Caco-2 (cell line): ENCODE measurements at regions of chr13 and their contacts with region 1.

Region 1: GRCh38 chr13:84896128-84896527 is 903.1 kb downstream of the SLITRK6 start:
- DNase-seq: peak in 1 of 2 experiments; percentile 55
- H3K4me3 ChIP-seq: no peak overlapping the region
- H3K4me3 Mint-ChIP-seq: no peak overlapping the region
- H3K27ac Mint-ChIP-seq: no peak overlapping the region
- H3K4me1 ChIP-seq: no peaks in the 10 kb centered on the region
- H3K4me1 Mint-ChIP-seq: no peaks in the 10 kb centered on the region
- H3K27me3 ChIP-seq: no peaks in the 10 kb centered on the region
- H3K27me3 Mint-ChIP-seq: no peaks in the 10 kb centered on the region
- CTCF ChIP-seq: peak; percentile 55 to 83

Region 2: GRCh38 chr13:84315527-84315926 is 580.6 kb before region 1 on chr13:
- CTCF ChIA-PET with region 1: no interaction called
- POLR2A ChIA-PET with region 1: no interaction called
- intact Hi-C with region 1: no loop called
- DNase-seq: no peak
- H3K4me3 ChIP-seq: no peak overlapping the region
- H3K4me3 Mint-ChIP-seq: no peak overlapping the region
- H3K27ac Mint-ChIP-seq: no peak overlapping the region
- H3K4me1 ChIP-seq: no peaks in the 10 kb centered on the region
- H3K4me1 Mint-ChIP-seq: no peaks in the 10 kb centered on the region
- H3K27me3 ChIP-seq: no peaks in the 10 kb centered on the region
- H3K27me3 Mint-ChIP-seq: no peaks in the 10 kb centered on the region
- CTCF ChIP-seq: no peak

Region 3: GRCh38 chr13:85806553-85807175 is 910.5 kb after region 1 on chr13:
- CTCF ChIA-PET with region 1: no interaction called
- POLR2A ChIA-PET with region 1: no interaction called
- intact Hi-C with region 1: loop called (anchors 1 kb)
- DNase-seq: peak in 1 of 2 experiments; percentile 59
- H3K4me3 ChIP-seq: no peak overlapping the region
- H3K4me3 Mint-ChIP-seq: no peak overlapping the region
- H3K27ac Mint-ChIP-seq: no peak overlapping the region
- H3K4me1 ChIP-seq: no peaks in the 10 kb centered on the region
- H3K4me1 Mint-ChIP-seq: no peaks in the 10 kb centered on the region
- H3K27me3 ChIP-seq: no peaks in the 10 kb centered on the region
- H3K27me3 Mint-ChIP-seq: no peaks in the 10 kb centered on the region
- CTCF ChIP-seq: peak; percentile 56 to 81

Region 4: DNA sequence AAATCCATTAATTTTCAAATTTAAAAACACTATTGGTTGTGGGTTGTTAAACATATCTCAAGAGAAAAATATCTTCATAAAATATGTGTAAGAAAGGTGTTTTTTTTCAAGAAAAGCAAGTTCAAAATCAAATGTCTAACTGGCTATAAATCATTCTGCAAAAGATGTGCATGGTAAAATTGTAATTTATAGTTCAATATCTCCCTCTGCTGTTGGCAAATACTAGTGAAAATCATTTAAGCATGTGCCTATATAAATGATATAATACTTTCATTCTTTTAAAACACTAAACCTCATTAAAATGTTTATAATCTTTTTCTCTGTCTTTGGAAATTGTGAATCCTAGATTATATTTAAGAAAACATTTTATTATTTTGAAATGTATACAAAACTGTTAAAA is 920.3 kb after region 1 on chr13:
- CTCF ChIA-PET with region 1: no interaction called
- POLR2A ChIA-PET with region 1: no interaction called
- intact Hi-C with region 1: loop called (anchors 2 kb)
- DNase-seq: no peak
- H3K4me3 ChIP-seq: no peak overlapping the region
- H3K4me3 Mint-ChIP-seq: no peak overlapping the region
- H3K27ac Mint-ChIP-seq: no peak overlapping the region
- H3K4me1 ChIP-seq: no peaks in the 10 kb centered on the region
- H3K4me1 Mint-ChIP-seq: no peaks in the 10 kb centered on the region
- H3K27me3 ChIP-seq: no peaks in the 10 kb centered on the region
- H3K27me3 Mint-ChIP-seq: no peaks in the 10 kb centered on the region
- CTCF ChIP-seq: peak; percentile 16 to 33

Region 5: GRCh38 chr13:85828149-85828548 is 932.0 kb after region 1 on chr13:
- CTCF ChIA-PET with region 1: no interaction called
- POLR2A ChIA-PET with region 1: no interaction called
- intact Hi-C with region 1: loop called (anchors 1 kb)
- DNase-seq: no peak
- H3K4me3 ChIP-seq: no peak overlapping the region
- H3K4me3 Mint-ChIP-seq: no peak overlapping the region
- H3K27ac Mint-ChIP-seq: no peak overlapping the region
- H3K4me1 ChIP-seq: no peaks in the 10 kb centered on the region
- H3K4me1 Mint-ChIP-seq: no peaks in the 10 kb centered on the region
- H3K27me3 ChIP-seq: no peaks in the 10 kb centered on the region
- H3K27me3 Mint-ChIP-seq: no peaks in the 10 kb centered on the region
- CTCF ChIP-seq: peak; percentile 65 to 79

Region 6: GRCh38 chr13:85864963-85865530 is 968.9 kb after region 1 on chr13:
- CTCF ChIA-PET with region 1: no interaction called
- POLR2A ChIA-PET with region 1: no interaction called
- intact Hi-C with region 1: loop called (anchors 1 kb)
- DNase-seq: peak in 1 of 2 experiments; percentile 31
- H3K4me3 ChIP-seq: no peak overlapping the region
- H3K4me3 Mint-ChIP-seq: no peak overlapping the region
- H3K27ac Mint-ChIP-seq: no peak overlapping the region
- H3K4me1 ChIP-seq: no peaks in the 10 kb centered on the region
- H3K4me1 Mint-ChIP-seq: no peaks in the 10 kb centered on the region
- H3K27me3 ChIP-seq: no peaks in the 10 kb centered on the region
- H3K27me3 Mint-ChIP-seq: no peaks in the 10 kb centered on the region
- CTCF ChIP-seq: peak; percentile 25 to 75